Dendritic cell treated with granulocyte-macrophage colony-stimulating factor and Interleukin-4, amounts not matched to agents 40 ng/mL and 50 ng/mL, for 4 days (primary cell): ENCODE measurements at regions of chr10 and their contacts with region 1.

Region 1: DNA sequence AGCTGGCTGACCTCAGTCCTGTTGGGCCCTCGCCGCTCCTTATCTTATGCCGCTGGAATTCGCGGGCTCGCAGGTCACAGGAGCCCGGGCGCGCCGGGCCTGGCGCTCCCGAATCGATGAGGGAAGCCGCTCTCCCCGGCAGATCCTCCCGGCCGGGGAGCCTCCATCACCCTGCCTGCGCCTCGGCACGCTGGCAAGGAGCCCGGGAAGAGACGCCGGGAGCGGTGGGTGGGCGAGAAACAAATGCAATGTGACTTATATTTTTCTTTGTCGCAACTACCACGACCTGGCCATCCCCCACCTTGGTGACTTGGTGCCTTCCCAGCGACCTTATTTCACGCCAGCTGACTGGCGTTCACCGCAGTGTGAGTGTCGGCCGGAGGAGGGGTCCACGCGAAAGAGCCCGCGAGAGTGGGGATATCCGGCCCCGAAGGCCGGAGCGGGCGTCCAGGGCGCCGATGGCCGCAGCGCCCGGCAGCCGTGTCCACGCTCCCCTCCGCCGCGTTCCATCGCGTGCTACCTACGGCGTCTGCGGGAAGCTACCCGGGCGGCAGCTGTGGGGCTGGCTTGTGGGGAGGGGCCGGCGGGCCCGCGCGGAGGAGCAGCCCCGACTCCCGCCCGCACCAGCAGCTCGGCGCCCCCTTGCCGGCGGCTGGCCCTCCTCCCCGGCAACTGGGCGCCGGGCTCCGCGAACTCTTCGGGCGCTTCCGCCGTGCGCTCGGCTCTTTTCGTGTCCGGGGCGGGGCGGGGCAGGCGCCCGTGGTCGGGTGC is 494 bp upstream of the BMPR1A start:
- H3K4me3 Mint-ChIP-seq: peak overlapping the region; percentile 69
- H3K27ac Mint-ChIP-seq: peak overlapping the region; percentile 37
- H3K4me1 Mint-ChIP-seq: peaks cover 23% of the 10 kb centered on the region
- H3K27me3 Mint-ChIP-seq: peaks cover 71% of the 10 kb centered on the region

Region 2: GRCh38 chr10:86710987-86711512 is 44.9 kb before region 1 on chr10:
- intact Hi-C with region 1: loop called (anchors 2 kb)
- H3K4me3 Mint-ChIP-seq: peak overlapping the region; percentile 65
- H3K27ac Mint-ChIP-seq: peak overlapping the region; percentile 84
- H3K4me1 Mint-ChIP-seq: peaks cover 12% of the 10 kb centered on the region
- H3K27me3 Mint-ChIP-seq: peaks cover 2% of the 10 kb centered on the region

Region 3: DNA sequence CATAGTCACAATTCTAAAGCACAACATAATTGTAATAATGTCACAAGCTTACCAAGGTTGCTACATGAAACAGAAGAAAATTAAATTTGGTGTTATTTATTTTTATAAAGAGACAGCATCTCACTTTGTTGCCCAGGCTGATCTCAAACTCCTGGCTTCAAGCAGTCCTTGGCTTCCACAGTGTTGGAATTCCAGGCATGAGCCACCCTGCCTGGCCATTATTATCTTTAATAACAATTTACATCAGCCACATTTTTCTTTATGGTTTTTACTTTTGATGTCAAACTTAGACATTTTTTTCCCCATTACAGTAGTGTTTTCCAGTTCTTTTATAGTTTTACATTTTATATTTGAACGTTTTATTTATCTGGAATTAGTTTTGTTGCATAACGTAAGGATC is 47.2 kb after region 1 on chr10:
- intact Hi-C with region 1: no loop called
- H3K4me3 Mint-ChIP-seq: no peak overlapping the region
- H3K27ac Mint-ChIP-seq: no peak overlapping the region
- H3K4me1 Mint-ChIP-seq: no peaks in the 10 kb centered on the region
- H3K27me3 Mint-ChIP-seq: no peaks in the 10 kb centered on the region

Region 4: GRCh38 chr10:86836044-86836443 is 80.1 kb after region 1 on chr10:
- intact Hi-C with region 1: no loop called
- H3K4me3 Mint-ChIP-seq: no peak overlapping the region
- H3K27ac Mint-ChIP-seq: no peak overlapping the region
- H3K4me1 Mint-ChIP-seq: no peaks in the 10 kb centered on the region
- H3K27me3 Mint-ChIP-seq: peaks cover 3% of the 10 kb centered on the region